ENCODE measurements at regions of chr14 and their contacts with region 1.

Region 1: GRCh38 chr14:51283402-51284085 is 43.5 kb downstream of the TMX1 start:
- DNase-seq: peak; percentile 77
- H3K4me3 ChIP-seq: no peak overlapping the region
- CTCF ChIP-seq: peak; percentile 38

Region 2: DNA sequence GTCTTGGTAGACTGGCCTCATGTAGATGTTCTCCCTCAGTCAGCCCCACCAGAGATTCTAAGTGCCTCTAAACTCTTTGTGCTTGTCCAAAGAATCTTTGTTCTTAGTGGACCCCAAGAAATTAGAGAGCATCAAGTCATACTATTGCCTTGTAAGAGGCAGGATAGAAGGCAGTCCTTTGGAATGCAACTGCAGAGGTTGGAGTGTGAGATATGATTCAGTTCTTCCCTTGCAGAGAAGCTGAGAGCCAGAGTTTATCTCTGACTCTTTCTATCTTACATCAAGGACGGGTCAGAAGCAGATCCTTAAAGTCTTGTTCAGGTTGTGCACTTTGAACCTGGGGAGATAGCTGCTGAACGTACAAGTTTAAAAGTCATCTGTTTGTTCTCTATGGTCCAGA is 22.4 kb before region 1 on chr14:
- CTCF ChIA-PET with region 1: interaction called, 11 read pairs
- POLR2A ChIA-PET with region 1: no interaction called
- DNase-seq: no peak
- H3K4me3 ChIP-seq: no peak overlapping the region
- CTCF ChIP-seq: no peak

Region 3: GRCh38 chr14:51310505-51310944 is 27.0 kb after region 1 on chr14:
- CTCF ChIA-PET with region 1: no interaction called
- POLR2A ChIA-PET with region 1: no interaction called
- DNase-seq: no peak
- H3K4me3 ChIP-seq: no peak overlapping the region
- CTCF ChIP-seq: no peak

Region 4: GRCh38 chr14:51327376-51327775 is 43.8 kb after region 1 on chr14:
- CTCF ChIA-PET with region 1: no interaction called
- POLR2A ChIA-PET with region 1: no interaction called
- DNase-seq: no peak
- H3K4me3 ChIP-seq: no peak overlapping the region
- CTCF ChIP-seq: no peak

Region 5: GRCh38 chr14:51448831-51449670 is 165.5 kb after region 1 on chr14:
- CTCF ChIA-PET with region 1: interaction called, 15 read pairs
- POLR2A ChIA-PET with region 1: no interaction called
- DNase-seq: peak; percentile 69
- H3K4me3 ChIP-seq: no peak overlapping the region
- CTCF ChIP-seq: no peak

Region 6: GRCh38 chr14:51548187-51548586 is 264.6 kb after region 1 on chr14:
- CTCF ChIA-PET with region 1: interaction called, 17 read pairs
- POLR2A ChIA-PET with region 1: no interaction called
- DNase-seq: no peak
- H3K4me3 ChIP-seq: no peak overlapping the region
- CTCF ChIP-seq: no peak

Region 7: DNA sequence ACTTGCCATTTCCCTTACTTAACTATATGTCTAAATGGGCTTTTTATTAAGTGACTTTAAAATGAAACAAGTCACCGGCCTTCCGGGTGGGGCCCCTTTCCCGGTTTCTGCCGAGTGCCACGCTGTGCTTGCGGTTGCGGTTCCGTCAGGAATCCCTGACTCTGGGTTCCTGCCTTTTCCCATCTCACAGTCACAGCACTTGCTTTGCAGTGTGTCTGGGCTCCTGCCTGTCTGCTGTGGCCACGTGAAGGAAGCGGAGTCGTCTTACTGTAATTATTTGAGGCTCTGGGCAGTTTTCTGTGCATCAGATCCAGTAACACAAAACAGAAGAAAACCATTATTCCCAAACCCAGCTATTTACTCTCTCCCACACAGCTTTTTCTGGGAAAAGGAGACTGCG is 324.2 kb after region 1 on chr14:
- CTCF ChIA-PET with region 1: interaction called, 12 read pairs
- POLR2A ChIA-PET with region 1: interaction called, 3 read pairs
- DNase-seq: peak; percentile 93
- H3K4me3 ChIP-seq: peak overlapping the region; percentile 33
- CTCF ChIP-seq: no peak

Region 8: GRCh38 chr14:51682411-51682810 is 398.9 kb after region 1 on chr14:
- CTCF ChIA-PET with region 1: interaction called, 20 read pairs
- POLR2A ChIA-PET with region 1: no interaction called
- DNase-seq: no peak
- H3K4me3 ChIP-seq: no peak overlapping the region
- CTCF ChIP-seq: no peak